Posterior vena cava (tissue), 2 donors: ENCODE measurements at regions of chr15 and their contacts with region 1.

Region 1: GRCh38 chr15:40999190-40999589 is 45.9 kb downstream of the CHAC1 start:
- DNase-seq: no peak

Region 2: DNA sequence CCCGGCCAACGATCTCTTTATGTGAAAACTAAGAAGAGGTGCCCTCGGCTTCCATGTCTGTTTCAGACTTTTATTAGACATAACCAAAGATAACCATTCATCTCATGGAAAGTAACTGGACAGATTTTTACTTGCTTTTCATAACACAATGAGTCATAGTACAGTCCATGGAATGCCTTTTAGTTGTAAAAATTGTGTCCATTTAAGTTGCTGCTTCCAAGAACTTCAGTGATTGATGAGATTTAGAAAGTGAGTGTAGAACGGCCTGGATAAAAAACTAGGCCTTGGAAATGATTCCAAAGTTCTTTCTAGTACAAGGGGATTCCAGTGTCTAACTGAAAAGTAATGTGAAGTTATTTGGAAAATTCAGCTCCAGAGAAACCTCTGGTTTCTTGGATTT is 1054.5 kb before region 1 on chr15:
- intact Hi-C with region 1: loop called in 1 of 2 experiments (anchors 5 kb)
- DNase-seq: no peak

Region 3: GRCh38 chr15:41429003-41429890 is 430.1 kb after region 1 on chr15:
- intact Hi-C with region 1: no loop called
- DNase-seq: no peak